Endothelial cell of umbilical vein (primary cell): ENCODE measurements at regions of chr22 and their contacts with region 1.

Region 1: GRCh38 chr22:23281406-23282088 is 101.2 kb downstream of the BCR start:
- DNase-seq: peak; percentile 84
- H3K4me3 ChIP-seq: no peak overlapping the region
- H3K27ac ChIP-seq: peak overlapping the region; percentile 75
- H3K4me1 ChIP-seq: peaks cover 30% of the 10 kb centered on the region
- H3K27me3 ChIP-seq: no peaks in the 10 kb centered on the region
- CTCF ChIP-seq: peak; percentile 90 to 94
- POLR2A ChIP-seq: no peak

Region 2: DNA sequence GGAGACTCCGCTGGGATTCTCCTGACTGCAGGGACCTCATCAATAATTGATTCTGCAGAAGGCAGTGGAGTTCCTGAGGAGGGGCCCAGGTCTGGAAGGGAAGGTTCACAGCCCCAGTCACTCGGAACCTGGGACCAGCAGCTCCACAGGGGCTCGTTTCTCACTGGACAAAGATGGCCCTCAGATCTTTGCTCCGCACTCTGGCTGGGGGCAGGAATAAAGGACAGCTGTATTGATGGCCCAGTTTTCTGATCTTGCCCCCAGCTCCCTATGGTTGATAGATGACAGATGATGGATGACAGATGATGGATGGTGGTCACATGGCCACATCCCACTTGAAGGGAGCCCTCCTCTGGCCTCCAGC is 112.5 kb before region 1 on chr22:
- CTCF ChIA-PET with region 1: interaction called, 451 read pairs
- POLR2A ChIA-PET with region 1: no interaction called
- dilution Hi-C with region 1: no loop called
- intact Hi-C with region 1: loop called (anchors 1 kb)
- DNase-seq: no peak
- H3K4me3 ChIP-seq: no peak overlapping the region
- H3K27ac ChIP-seq: no peak overlapping the region
- H3K4me1 ChIP-seq: no peaks in the 10 kb centered on the region
- H3K27me3 ChIP-seq: no peaks in the 10 kb centered on the region
- CTCF ChIP-seq: no peak
- POLR2A ChIP-seq: no peak

Region 3: DNA sequence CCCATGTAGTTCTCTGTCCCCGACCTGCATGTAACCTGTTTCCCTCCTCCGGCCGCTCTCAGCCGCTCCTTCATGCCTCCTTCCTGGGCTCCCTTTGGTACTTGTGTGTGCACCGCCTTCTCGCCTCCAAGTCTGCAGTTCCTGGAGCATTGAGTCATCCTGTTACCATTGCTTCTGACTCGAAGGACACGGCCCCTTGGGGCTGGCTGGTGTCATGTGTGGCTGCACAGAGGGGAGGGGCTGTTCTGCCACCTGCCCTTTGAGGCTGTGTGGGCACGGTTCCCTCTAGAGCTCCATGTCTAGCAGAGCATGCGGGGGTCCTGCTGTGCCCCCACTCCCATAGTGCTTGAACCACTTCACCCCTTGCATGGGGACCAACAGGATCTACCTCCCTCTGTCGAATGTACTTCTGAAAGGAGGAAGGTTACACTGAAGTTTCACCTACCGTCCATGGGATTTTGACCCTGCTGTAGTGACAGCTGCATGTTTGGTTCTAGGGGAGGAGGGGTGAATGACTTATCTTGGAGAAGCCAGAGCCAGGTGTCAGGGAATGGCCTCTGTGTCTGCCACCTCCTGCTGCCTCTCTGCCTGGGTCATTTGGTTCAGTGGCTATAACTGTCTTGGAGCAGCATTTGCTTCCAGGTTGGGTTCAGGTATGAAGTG is 61.6 kb before region 1 on chr22:
- CTCF ChIA-PET with region 1: interaction called, 29 read pairs
- POLR2A ChIA-PET with region 1: no interaction called
- dilution Hi-C with region 1: no loop called
- intact Hi-C with region 1: loop called (anchors 2 kb)
- DNase-seq: peak; percentile 73
- H3K4me3 ChIP-seq: no peak overlapping the region
- H3K27ac ChIP-seq: peak overlapping the region; percentile 84
- H3K4me1 ChIP-seq: peaks cover 92% of the 10 kb centered on the region
- H3K27me3 ChIP-seq: no peaks in the 10 kb centered on the region
- CTCF ChIP-seq: no peak
- POLR2A ChIP-seq: no peak

Region 4: DNA sequence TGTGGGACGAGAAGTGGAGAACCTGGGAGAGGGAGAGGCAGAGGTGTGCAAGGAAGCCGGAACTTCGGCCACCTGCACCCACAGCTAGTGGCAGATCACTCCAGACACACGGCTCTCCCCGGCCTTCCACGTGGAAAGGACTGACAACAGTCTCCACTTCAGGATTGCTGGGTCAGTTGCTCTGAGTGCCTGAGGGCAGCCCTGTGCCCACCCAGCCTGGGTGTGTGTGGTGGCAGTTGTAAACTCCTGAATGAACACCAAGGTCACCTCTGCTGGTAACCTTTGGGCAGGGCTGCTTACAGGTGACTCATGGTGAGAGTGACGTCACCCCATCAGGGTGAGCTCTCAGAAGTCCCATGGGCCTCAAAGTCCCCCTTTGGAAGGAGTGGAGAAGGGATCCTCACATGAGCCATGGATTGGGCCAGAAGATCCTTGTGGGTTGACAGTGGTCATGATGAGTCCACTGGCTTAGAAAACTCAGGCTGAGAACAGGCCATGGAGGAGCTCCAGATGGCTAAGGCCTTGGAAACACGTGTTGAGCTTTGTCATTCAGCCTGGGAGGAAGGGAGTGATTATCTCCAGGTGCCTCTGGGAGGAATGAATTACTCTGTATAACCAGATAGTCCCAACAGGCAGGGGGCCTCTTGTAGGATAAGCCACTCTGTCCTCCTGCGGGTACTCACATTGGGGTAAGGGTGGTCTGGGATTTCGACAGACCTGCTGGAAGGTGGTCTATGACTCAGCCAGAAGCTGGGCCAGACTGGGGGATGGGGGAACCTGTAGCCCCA is 29.9 kb before region 1 on chr22:
- CTCF ChIA-PET with region 1: interaction called, 11 read pairs
- POLR2A ChIA-PET with region 1: no interaction called
- dilution Hi-C with region 1: no loop called
- intact Hi-C with region 1: no loop called
- DNase-seq: no peak
- H3K4me3 ChIP-seq: no peak overlapping the region
- H3K27ac ChIP-seq: no peak overlapping the region
- H3K4me1 ChIP-seq: peaks cover 6% of the 10 kb centered on the region
- H3K27me3 ChIP-seq: no peaks in the 10 kb centered on the region
- CTCF ChIP-seq: no peak
- POLR2A ChIP-seq: no peak

Region 5: DNA sequence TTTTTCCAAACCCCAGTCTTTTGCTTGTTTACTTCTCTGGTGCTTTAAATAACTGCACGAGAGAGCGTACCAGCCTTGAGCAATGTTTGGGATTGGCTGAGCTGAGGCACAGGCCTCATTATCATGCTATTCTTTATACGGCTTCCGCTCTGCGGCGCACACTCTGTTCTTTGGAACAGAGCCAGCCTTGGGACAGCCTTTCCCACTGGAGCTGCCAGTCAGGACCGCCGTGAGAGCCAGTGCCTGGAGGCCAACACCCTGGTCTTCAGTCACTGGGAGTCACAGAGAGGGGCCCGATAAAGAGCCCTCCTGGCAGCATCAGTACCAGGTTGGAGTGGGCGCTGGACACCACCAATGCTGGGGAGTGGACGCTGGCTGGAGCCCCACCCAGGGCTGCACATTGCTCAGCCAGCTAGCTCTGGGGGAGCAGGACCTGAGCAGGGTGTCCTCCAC is 24.4 kb after region 1 on chr22:
- CTCF ChIA-PET with region 1: interaction called, 24 read pairs
- POLR2A ChIA-PET with region 1: interaction called, 3 read pairs
- dilution Hi-C with region 1: no loop called
- intact Hi-C with region 1: loop called (anchors 1 kb)
- DNase-seq: peak; percentile 96
- H3K4me3 ChIP-seq: peak overlapping the region in 1 of 3 experiments; percentile 1
- H3K27ac ChIP-seq: peak overlapping the region; percentile 96
- H3K4me1 ChIP-seq: peaks cover 69% of the 10 kb centered on the region
- H3K27me3 ChIP-seq: no peaks in the 10 kb centered on the region
- CTCF ChIP-seq: no peak
- POLR2A ChIP-seq: no peak

Region 6: DNA sequence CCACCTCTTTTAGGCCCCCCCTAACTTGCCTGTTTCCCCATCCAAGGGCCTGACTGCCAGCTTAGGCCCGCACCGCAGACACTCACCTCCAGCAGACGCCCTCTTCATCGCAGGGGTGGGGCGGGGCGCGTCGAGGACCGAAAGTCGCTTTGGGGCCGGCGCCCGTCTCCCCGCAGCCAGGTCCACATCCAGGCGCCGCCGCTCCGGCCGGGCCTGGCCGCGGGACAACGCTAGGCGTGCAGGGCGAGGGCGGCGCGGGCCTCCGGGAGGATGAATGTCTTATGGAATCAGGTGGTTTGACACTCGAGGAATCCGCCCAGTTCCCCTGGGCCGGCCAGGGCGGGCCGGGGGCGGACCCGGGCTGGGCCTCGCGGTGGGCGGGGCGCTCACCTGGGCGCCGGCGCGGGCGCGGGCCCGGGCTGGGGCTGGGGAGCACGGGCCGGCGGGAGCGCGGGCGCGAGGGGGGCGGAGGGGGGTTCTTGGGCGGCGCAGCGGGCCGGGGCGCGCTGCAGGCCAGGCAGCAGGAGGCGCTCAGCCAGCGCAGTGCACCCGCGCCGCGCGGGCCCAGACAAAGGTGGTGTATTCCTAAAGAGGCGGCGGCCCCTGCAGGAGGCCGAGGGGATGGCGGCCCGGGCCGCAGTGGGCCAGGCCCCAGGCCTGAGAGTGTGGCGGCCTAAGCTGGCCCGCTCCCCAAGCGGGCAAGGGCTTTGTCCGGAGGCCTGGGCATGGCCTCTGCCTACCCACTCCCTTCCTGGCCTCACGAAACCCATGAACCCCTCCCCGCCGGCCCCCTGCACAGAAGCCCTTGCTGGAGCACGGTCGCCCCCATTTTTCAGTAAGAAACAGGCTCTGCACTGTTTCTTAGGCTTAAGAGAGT is 121.0 kb after region 1 on chr22:
- CTCF ChIA-PET with region 1: no interaction called
- POLR2A ChIA-PET with region 1: no interaction called
- dilution Hi-C with region 1: no loop called
- intact Hi-C with region 1: no loop called
- DNase-seq: peak; percentile 39
- H3K4me3 ChIP-seq: peak overlapping the region in 1 of 3 experiments; percentile 15
- H3K27ac ChIP-seq: no peak overlapping the region
- H3K4me1 ChIP-seq: no peaks in the 10 kb centered on the region
- H3K27me3 ChIP-seq: no peaks in the 10 kb centered on the region
- CTCF ChIP-seq: peak; percentile 45 to 86
- POLR2A ChIP-seq: no peak